Esophagus squamous epithelium (tissue), 5 donors: ENCODE measurements at regions of chr16 and their contacts with region 1.

Region 1: GRCh38 chr16:23803591-23804123 is 32.1 kb upstream of the PRKCB start:
- DNase-seq: no peak
- H3K4me3 ChIP-seq: peak overlapping the region in 1 of 4 donors; percentile 18
- H3K27ac ChIP-seq: no peak overlapping the region
- H3K4me1 ChIP-seq: peaks cover 0 to 7% (median 0%) of the 10 kb centered on the region in 3 donors
- H3K27me3 ChIP-seq: no peaks in the 10 kb centered on the region
- CTCF ChIP-seq: peak in 5 of 6 experiments; percentile 32 to 48 (median 39)
- POLR2A ChIP-seq: no peak

Region 2: GRCh38 chr16:24010440-24011089 is 206.9 kb after region 1 on chr16:
- intact Hi-C with region 1: loop called (anchors 5 kb)
- DNase-seq: peak; percentile 25
- H3K4me3 ChIP-seq: no peak overlapping the region
- H3K27ac ChIP-seq: no peak overlapping the region
- H3K4me1 ChIP-seq: peaks cover 0 to 11% (median 0%) of the 10 kb centered on the region in 3 donors
- H3K27me3 ChIP-seq: peaks cover 0 to 22% (median 0%) of the 10 kb centered on the region in 4 donors
- CTCF ChIP-seq: peak; percentile 61 to 74 (median 72)
- POLR2A ChIP-seq: no peak

Region 3: DNA sequence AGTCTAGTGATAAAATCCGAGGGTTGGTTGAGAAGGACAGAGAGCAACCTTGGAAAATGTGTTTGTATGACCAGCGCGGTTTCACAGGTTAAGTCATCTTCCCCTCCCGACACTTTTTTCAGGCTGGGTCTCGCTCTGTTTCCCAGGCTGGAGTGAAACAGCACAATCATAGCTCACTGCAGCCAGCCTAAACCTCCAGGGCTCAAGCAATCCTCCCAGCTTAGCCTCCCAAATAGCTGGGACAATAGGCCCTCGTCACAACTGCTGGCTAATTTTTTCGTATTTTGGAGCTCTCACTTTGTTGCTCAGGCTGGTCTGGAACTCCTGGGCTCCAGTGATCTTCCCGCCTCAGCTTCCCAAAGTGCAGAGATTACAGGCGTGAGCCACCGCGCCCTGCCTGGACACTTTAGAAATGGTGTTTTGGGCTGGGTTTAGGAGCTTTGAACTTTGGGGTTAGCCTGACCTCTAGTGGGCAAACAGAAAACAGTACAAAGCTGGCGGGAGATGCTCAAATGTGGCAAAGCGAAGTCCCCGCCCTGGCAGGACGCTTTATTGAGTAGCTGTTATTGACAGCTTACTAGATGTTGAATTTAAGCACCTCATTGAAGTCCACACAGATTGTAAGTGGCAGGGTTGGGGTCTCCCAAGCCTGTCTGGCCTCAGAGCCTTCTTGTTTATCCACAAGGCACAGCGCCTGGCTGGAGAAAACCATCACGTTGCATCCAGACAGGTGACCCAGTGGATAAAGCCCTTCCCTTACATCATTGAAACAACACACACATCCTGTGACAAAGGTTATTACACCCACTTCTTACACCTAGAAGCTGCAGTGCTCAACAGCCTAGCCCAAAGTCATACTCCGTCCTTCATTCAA is 701.1 kb after region 1 on chr16:
- intact Hi-C with region 1: loop called (anchors 10 kb)
- DNase-seq: no peak
- H3K4me3 ChIP-seq: no peak overlapping the region
- H3K27ac ChIP-seq: no peak overlapping the region
- H3K4me1 ChIP-seq: no peaks in the 10 kb centered on the region
- H3K27me3 ChIP-seq: peaks cover 0 to 62% (median 0%) of the 10 kb centered on the region in 4 donors
- CTCF ChIP-seq: peak; percentile 44 to 74 (median 62)
- POLR2A ChIP-seq: no peak